A673 (cell line): ENCODE measurements at regions of chr2 and their contacts with region 1.

Region 1: DNA sequence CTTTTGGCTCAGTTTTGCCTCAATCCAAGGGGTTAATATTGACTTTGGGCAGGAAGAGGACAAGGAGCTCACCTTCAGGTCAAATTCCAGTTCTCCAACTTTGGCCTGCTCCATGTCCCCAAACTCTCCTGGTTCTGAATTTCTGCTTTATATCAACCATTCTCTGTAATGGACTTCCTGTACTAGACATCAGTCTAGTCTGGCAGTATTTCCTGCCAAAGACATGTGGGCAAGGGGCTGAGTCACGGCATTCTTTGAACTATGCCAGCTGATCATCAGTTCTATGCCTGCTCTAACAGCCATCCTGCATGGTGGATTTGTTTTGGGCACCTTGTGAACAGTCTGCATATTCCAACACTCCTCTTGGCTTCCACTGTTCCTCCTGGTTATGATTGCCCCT is 199.4 kb downstream of the ZEB2 start:
- DNase-seq: peak; percentile 60
- H3K4me3 ChIP-seq: no peak overlapping the region
- H3K27ac ChIP-seq: peak overlapping the region; percentile 40
- H3K4me1 ChIP-seq: peaks cover 58% of the 10 kb centered on the region
- H3K27me3 ChIP-seq: no peaks in the 10 kb centered on the region
- CTCF ChIP-seq: no peak

Region 2: DNA sequence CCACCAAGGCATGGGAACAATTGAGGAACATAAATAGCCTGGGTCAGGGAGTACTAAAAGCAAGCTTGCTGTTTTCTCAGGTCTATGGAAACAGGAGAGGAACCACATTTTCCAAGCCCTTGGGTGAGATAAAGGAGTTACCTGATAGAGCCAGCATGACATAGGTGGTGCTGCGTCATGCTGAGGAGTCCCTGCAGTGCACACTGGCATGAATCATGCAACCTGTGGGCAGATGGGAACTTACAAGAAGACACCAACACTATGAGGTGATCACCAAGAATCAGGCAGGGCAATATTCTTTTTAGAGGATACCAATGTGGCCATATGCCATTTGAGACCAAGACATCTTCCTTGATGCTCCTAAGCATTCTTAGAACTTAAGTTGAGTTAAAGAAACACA is 332.4 kb before region 1 on chr2:
- CTCF ChIA-PET with region 1: no interaction called
- POLR2A ChIA-PET with region 1: no interaction called
- intact Hi-C with region 1: no loop called
- DNase-seq: no peak
- H3K4me3 ChIP-seq: no peak overlapping the region
- H3K27ac ChIP-seq: no peak overlapping the region
- H3K4me1 ChIP-seq: no peaks in the 10 kb centered on the region
- H3K27me3 ChIP-seq: no peaks in the 10 kb centered on the region
- CTCF ChIP-seq: no peak

Region 3: GRCh38 chr2:144143294-144144151 is 177.0 kb before region 1 on chr2:
- CTCF ChIA-PET with region 1: no interaction called
- POLR2A ChIA-PET with region 1: no interaction called
- intact Hi-C with region 1: no loop called
- DNase-seq: no peak
- H3K4me3 ChIP-seq: no peak overlapping the region
- H3K27ac ChIP-seq: no peak overlapping the region
- H3K4me1 ChIP-seq: no peaks in the 10 kb centered on the region
- H3K27me3 ChIP-seq: no peaks in the 10 kb centered on the region
- CTCF ChIP-seq: no peak

Region 4: DNA sequence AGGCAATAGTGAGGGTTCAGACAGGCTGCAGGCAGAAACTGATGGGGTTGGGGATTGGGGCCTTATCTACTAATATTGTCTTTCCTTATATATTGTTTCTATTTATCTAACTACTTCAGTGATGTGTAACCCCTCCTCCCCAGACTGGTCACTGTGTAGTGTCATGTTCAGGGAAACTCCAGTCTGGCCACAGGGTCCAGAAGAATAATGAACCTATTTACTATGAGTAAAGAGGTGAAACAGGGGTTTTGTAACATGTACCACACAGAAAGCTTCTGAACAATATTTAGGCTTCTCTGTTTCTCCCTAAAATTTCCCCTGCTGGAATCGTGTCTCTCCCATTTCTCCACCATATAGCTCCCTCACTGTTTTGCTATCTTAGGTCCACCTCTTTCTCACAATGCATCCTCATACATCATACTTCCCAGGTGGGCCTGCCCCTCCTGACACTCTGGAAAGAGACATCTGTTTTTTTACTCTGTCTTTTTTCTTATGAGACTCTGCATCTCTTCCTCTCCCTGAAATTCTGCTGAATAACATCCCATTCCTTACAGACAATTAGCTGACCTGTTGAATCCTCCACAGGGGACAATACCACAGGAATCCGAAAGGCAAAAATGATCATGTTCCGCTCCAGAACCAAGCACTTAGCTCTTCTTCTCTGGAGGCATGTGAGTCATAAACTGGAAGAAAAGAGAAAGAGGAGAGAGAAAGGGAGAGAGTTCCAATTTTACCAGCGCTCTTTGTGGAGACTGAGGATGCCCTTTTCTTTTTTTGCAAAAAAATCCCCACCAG is 44.6 kb after region 1 on chr2:
- CTCF ChIA-PET with region 1: interaction called, 11 read pairs
- POLR2A ChIA-PET with region 1: no interaction called
- intact Hi-C with region 1: loop called (anchors 1 kb)
- DNase-seq: peak; percentile 58
- H3K4me3 ChIP-seq: no peak overlapping the region
- H3K27ac ChIP-seq: peak overlapping the region; percentile 33
- H3K4me1 ChIP-seq: peaks cover 20% of the 10 kb centered on the region
- H3K27me3 ChIP-seq: no peaks in the 10 kb centered on the region
- CTCF ChIP-seq: no peak

Region 5: GRCh38 chr2:144382849-144383248 is 62.4 kb after region 1 on chr2:
- CTCF ChIA-PET with region 1: no interaction called
- POLR2A ChIA-PET with region 1: no interaction called
- intact Hi-C with region 1: no loop called
- DNase-seq: no peak
- H3K4me3 ChIP-seq: no peak overlapping the region
- H3K27ac ChIP-seq: no peak overlapping the region
- H3K4me1 ChIP-seq: no peaks in the 10 kb centered on the region
- H3K27me3 ChIP-seq: no peaks in the 10 kb centered on the region
- CTCF ChIP-seq: no peak

Region 6: GRCh38 chr2:144942516-144943256 is 622.2 kb after region 1 on chr2:
- CTCF ChIA-PET with region 1: no interaction called
- POLR2A ChIA-PET with region 1: no interaction called
- intact Hi-C with region 1: loop called (anchors 10 kb)
- DNase-seq: peak; percentile 55
- H3K4me3 ChIP-seq: no peak overlapping the region
- H3K27ac ChIP-seq: peak overlapping the region; percentile 72
- H3K4me1 ChIP-seq: peaks cover 70% of the 10 kb centered on the region
- H3K27me3 ChIP-seq: no peaks in the 10 kb centered on the region
- CTCF ChIP-seq: no peak

Region 7: GRCh38 chr2:145652571-145653545 is 1332.4 kb after region 1 on chr2:
- CTCF ChIA-PET with region 1: no interaction called
- POLR2A ChIA-PET with region 1: no interaction called
- intact Hi-C with region 1: loop called (anchors 5 kb)
- DNase-seq: peak; percentile 90
- H3K4me3 ChIP-seq: no peak overlapping the region
- H3K27ac ChIP-seq: peak overlapping the region; percentile 83
- H3K4me1 ChIP-seq: peaks cover 59% of the 10 kb centered on the region
- H3K27me3 ChIP-seq: no peaks in the 10 kb centered on the region
- CTCF ChIP-seq: no peak